ENCODE measurements at regions of chr1 and their contacts with region 1.

Region 1: GRCh38 chr1:24930204-24931145 is at the start of gene RUNX3:
- DNase-seq: peak; percentile 94
- ATAC-seq: peak; percentile 87
- H3K4me3 Mint-ChIP-seq: peak within 1 kb of the TSS; percentile 98
- H3K27ac Mint-ChIP-seq: peak within 1 kb of the TSS; percentile 96
- H3K4me1 Mint-ChIP-seq: peaks cover 73% of the 10 kb centered on the region
- H3K27me3 Mint-ChIP-seq: no peaks in the 10 kb centered on the region
- CTCF ChIP-seq: no peak
- total RNA-seq, gene RUNX3: 141 and 153 TPM in 2 replicates

Region 2: GRCh38 chr1:24642481-24643361 is 287.8 kb before region 1 on chr1 and contains the start of gene SRRM1:
- CTCF ChIA-PET with region 1: no interaction called
- POLR2A ChIA-PET with region 1: interaction called, 3 read pairs
- intact Hi-C with region 1: loop called (anchors 2 kb)
- DNase-seq: peak; percentile 96
- ATAC-seq: peak; percentile 90
- H3K4me3 Mint-ChIP-seq: peak within 1 kb of the TSS; percentile 96
- H3K27ac Mint-ChIP-seq: peak within 1 kb of the TSS; percentile 99
- H3K4me1 Mint-ChIP-seq: peaks cover 38% of the 10 kb centered on the region
- H3K27me3 Mint-ChIP-seq: no peaks in the 10 kb centered on the region
- CTCF ChIP-seq: no peak
- total RNA-seq, gene SRRM1: 214 and 220 TPM in 2 replicates

Region 3: GRCh38 chr1:24946861-24947658 is 16.6 kb after region 1 on chr1:
- CTCF ChIA-PET with region 1: interaction called, 16 read pairs
- POLR2A ChIA-PET with region 1: interaction called, 15 read pairs
- intact Hi-C with region 1: loop called (anchors 1 kb)
- DNase-seq: no peak
- ATAC-seq: peak; percentile 75
- H3K4me3 Mint-ChIP-seq: no peak overlapping the region
- H3K27ac Mint-ChIP-seq: peak overlapping the region; percentile 65
- H3K4me1 Mint-ChIP-seq: peaks cover 46% of the 10 kb centered on the region
- H3K27me3 Mint-ChIP-seq: no peaks in the 10 kb centered on the region
- CTCF ChIP-seq: no peak

Region 4: GRCh38 chr1:25031966-25032667 is 101.6 kb after region 1 on chr1:
- CTCF ChIA-PET with region 1: interaction called, 195 read pairs
- POLR2A ChIA-PET with region 1: interaction called, 385 read pairs
- intact Hi-C with region 1: loop called (anchors 1 kb)
- DNase-seq: peak; percentile 61
- ATAC-seq: peak; percentile 50
- H3K4me3 Mint-ChIP-seq: peak overlapping the region; percentile 80
- H3K27ac Mint-ChIP-seq: peak overlapping the region; percentile 97
- H3K4me1 Mint-ChIP-seq: peaks cover 3% of the 10 kb centered on the region
- H3K27me3 Mint-ChIP-seq: no peaks in the 10 kb centered on the region
- CTCF ChIP-seq: no peak

Region 5: DNA sequence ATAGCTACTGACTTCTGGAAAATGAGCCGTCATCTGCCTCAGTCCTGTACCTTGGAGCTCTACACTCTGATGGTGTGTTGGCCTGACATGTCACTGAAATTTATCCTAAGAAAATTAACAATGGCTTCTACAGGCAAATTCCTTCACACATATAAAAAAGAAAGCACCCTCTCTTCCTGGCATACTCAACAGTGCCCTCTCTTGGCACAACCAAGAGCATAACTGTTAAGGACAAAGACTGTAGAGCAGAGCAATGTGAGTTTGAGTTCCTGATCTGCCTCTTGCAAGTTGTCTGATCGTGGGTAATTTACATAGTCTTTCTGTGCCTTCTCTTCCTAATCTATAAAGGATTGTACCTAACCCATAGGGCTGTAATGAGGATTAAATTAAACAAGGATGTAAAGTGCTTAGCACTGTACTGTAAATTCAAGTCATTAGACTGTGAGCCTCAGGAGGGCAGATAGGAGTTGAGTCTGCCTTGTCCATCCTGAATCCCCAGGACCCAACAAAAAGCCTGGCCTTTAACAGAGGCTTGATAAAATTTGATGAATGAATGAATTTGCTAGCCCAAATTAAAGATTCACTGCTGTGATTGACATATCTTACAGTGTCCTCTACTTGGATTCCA is 218.3 kb after region 1 on chr1:
- CTCF ChIA-PET with region 1: no interaction called
- POLR2A ChIA-PET with region 1: interaction called, 6 read pairs
- intact Hi-C with region 1: loop called (anchors 5 kb)
- DNase-seq: no peak
- ATAC-seq: peak; percentile 40
- H3K4me3 Mint-ChIP-seq: no peak overlapping the region
- H3K27ac Mint-ChIP-seq: no peak overlapping the region
- H3K4me1 Mint-ChIP-seq: peaks cover 15% of the 10 kb centered on the region
- H3K27me3 Mint-ChIP-seq: peaks cover 32% of the 10 kb centered on the region
- CTCF ChIP-seq: no peak

Region 6: GRCh38 chr1:25185409-25186160 is 255.1 kb after region 1 on chr1:
- CTCF ChIA-PET with region 1: no interaction called
- POLR2A ChIA-PET with region 1: no interaction called
- intact Hi-C with region 1: no loop called
- DNase-seq: no peak
- ATAC-seq: no peak
- H3K4me3 Mint-ChIP-seq: no peak overlapping the region
- H3K27ac Mint-ChIP-seq: no peak overlapping the region
- H3K4me1 Mint-ChIP-seq: no peaks in the 10 kb centered on the region
- H3K27me3 Mint-ChIP-seq: peaks cover 16% of the 10 kb centered on the region
- CTCF ChIP-seq: no peak

Region 7: DNA sequence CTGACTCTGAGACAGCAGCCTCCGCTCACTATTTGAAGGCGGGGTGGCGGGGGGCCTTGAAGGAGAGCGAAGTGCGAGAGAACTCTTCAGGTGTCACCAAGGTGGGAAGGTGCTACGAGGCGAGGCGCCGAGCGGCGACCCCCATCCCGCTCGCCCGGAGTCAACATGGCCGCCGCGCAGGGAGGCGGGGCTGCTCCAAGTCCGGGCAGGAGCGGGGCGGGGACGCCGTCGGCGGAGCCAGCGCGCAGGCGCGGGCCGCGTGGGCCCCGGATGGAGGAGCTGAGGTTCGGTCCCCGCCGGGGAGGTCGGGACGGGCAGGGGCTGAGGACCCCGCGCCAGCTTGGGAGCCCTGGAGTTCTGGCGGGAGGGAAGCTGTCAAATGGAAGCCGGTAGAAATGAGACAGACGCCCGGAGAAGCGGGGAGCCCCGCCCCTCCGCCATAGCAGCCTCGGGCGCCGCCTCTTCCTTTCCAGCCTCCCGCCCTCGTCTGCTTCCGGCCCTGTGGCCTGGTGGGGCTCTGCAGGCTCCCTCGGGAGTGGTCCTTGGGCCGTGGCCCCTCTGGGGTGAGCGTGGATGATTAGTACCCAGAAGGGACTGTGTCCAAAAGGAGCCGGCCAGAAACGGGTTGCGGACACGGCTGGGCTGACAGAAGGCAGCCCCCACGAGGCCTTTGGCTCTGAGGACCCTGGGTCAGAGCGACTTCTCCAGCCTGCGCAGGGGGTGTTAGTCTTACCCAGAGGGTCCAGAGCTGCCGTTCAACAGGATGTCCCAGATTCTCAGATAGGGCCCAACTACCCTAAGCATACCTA is 1857.4 kb after region 1 on chr1 and contains the start of gene PIGV:
- CTCF ChIA-PET with region 1: no interaction called
- POLR2A ChIA-PET with region 1: interaction called, 14 read pairs
- intact Hi-C with region 1: no loop called
- DNase-seq: peak; percentile 94
- ATAC-seq: peak; percentile 70
- H3K4me3 Mint-ChIP-seq: peak within 1 kb of the TSS; percentile 98
- H3K27ac Mint-ChIP-seq: peak within 1 kb of the TSS; percentile 100
- H3K4me1 Mint-ChIP-seq: peaks cover 51% of the 10 kb centered on the region
- H3K27me3 Mint-ChIP-seq: no peaks in the 10 kb centered on the region
- CTCF ChIP-seq: no peak
- total RNA-seq, gene PIGV: 29.6 and 35.4 TPM in 2 replicates

Measured in activated B cell treated with CpG ODN at 0.5 μM for 24 hours (primary cell).